ENCODE measurements at regions of chr7 and their contacts with region 1.

Region 1: DNA sequence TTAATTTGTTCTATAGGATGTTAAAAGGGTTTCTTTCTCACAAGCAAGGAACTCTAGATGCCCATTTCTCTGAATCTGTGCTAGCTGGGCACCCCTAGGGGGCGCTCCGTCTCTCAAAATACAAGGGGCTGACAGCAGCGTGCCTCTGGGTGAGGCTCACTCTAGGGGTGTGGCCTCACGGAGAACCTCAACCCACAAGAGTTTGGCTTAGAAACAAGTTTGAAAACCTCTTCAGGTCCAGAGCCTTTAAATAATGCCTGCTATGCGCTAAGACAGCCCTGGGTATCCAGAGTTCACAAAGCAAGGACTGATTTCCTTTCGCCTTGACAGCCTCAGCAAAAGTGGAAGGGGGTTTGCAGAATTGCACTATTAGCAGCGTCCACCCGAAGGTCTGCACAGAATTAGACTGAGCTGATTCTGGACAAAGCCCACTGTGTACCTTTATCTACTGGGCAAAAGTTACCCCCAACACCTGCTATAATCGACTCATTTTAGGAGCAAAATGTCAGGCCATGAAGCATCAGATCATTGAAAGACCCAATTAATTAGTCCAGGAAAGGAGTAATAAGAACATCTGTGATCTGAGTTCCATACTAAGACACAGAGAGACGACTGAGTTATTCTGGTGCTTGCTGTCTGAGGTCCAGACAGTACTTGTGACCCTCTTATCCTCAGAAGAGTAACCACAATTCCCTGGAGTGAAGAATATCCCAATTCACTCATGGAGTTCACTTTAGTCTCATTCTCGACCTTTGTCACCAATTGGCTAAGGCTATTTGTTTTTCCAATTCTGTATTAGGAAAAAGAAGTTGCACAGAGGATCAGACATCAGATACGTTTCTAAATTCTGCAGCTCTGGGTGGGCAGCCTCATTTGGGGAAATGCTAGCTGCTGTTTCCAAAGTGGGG is 574 bp upstream of the CPED1 start:
- DNase-seq: peak; percentile 73
- ATAC-seq: peak; percentile 94
- H3K4me3 ChIP-seq: peak overlapping the region; percentile 47 to 65 (median 58)
- H3K27ac ChIP-seq: no peak overlapping the region
- H3K4me1 ChIP-seq: peaks cover 21% of the 10 kb centered on the region
- H3K27me3 ChIP-seq: peaks cover 0 to 14% of the 10 kb centered on the region in 2 experiments; a peak in 3 of 5 replicates
- CTCF ChIP-seq: peak; percentile 85
- EP300 ChIP-seq: no peak
- POLR2A ChIP-seq: no peak
- RAD21 ChIP-seq: peak; percentile 68

Region 2: DNA sequence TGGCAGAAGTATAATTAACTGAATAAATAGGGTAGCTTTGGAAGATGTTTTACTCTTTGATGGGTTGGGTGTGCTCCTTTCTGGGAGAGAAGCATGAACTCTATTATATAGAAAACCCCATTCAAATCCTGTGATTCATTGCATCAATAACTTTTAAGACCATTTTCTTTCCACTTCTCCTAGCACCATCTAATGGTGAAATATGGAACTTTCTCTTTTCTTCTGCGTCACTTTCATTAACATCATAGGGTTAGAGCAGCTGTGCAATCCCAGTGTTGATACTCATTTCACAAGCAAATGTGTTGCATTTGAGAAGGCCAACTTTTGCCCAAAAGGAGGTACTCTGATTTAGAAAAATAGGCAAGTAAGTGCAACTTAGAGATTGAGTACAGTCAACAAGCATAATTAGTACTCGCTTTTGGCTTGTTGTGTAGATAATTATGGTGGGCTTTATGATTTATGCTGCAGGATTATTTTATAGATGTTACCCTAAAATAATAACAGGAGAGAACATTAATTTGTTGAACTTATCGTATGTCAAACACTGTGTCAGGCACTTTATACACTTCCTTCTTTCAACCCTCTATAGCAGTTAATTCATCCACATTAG is 93.5 kb after region 1 on chr7:
- CTCF ChIA-PET with region 1: interaction called, 40 read pairs
- POLR2A ChIA-PET with region 1: interaction called, 3 read pairs
- in situ Hi-C with region 1: loop called (anchors 5 kb)
- intact Hi-C with region 1: loop called (anchors 1 kb)
- DNase-seq: peak; percentile 36
- ATAC-seq: peak; percentile 52
- H3K4me3 ChIP-seq: no peak overlapping the region
- H3K27ac ChIP-seq: no peak overlapping the region
- H3K4me1 ChIP-seq: peaks cover 11% of the 10 kb centered on the region
- H3K27me3 ChIP-seq: no peaks in the 10 kb centered on the region
- CTCF ChIP-seq: peak; percentile 68
- EP300 ChIP-seq: no peak
- POLR2A ChIP-seq: no peak
- RAD21 ChIP-seq: 0 out of 2 replicates have a peak, but pooled peaks have one; percentile 19

Region 3: GRCh38 chr7:121107923-121108498 is 120.1 kb after region 1 on chr7:
- CTCF ChIA-PET with region 1: interaction called, 19 read pairs
- POLR2A ChIA-PET with region 1: no interaction called
- in situ Hi-C with region 1: no loop called
- intact Hi-C with region 1: loop called (anchors 1 kb)
- DNase-seq: peak; percentile 53
- ATAC-seq: peak; percentile 94
- H3K4me3 ChIP-seq: no peak overlapping the region
- H3K27ac ChIP-seq: no peak overlapping the region
- H3K4me1 ChIP-seq: no peaks in the 10 kb centered on the region
- H3K27me3 ChIP-seq: no peaks in the 10 kb centered on the region
- CTCF ChIP-seq: peak; percentile 68
- EP300 ChIP-seq: no peak
- POLR2A ChIP-seq: no peak
- RAD21 ChIP-seq: no peak

Region 4: DNA sequence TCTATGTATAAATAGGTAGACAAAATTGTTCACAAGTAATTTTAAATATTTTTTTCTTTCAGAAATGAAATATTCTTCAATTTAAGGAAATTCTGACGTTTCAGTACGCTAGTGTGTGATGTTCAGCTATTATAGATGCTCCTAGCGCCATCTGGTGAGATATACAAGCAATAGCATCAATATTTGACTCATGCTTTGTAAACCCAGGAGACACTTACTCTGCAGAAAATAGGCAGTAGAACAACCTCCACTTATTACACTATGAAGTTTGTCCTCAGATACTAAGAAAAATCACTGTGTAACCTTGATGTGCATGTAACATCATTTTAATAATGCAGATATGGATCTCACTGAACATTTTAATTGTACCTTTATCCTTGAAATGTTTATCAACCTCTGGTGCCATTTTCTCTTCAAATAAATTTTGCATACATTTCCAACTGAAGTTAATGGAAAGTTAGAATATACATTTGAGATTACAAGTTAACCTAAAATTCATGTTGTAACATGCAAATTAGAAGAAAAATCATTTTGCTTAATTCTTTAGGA is 559.7 kb after region 1 on chr7:
- CTCF ChIA-PET with region 1: no interaction called
- POLR2A ChIA-PET with region 1: no interaction called
- in situ Hi-C with region 1: no loop called
- intact Hi-C with region 1: loop called (anchors 2 kb)
- DNase-seq: peak; percentile 44
- ATAC-seq: peak; percentile 84
- H3K4me3 ChIP-seq: no peak overlapping the region
- H3K27ac ChIP-seq: no peak overlapping the region
- H3K4me1 ChIP-seq: no peaks in the 10 kb centered on the region
- H3K27me3 ChIP-seq: no peaks in the 10 kb centered on the region
- CTCF ChIP-seq: peak; percentile 77
- EP300 ChIP-seq: no peak
- POLR2A ChIP-seq: no peak
- RAD21 ChIP-seq: no peak